Ascending aorta (tissue), 2 donors: ENCODE measurements at regions of chr10 and their contacts with region 1.

Region 1: DNA sequence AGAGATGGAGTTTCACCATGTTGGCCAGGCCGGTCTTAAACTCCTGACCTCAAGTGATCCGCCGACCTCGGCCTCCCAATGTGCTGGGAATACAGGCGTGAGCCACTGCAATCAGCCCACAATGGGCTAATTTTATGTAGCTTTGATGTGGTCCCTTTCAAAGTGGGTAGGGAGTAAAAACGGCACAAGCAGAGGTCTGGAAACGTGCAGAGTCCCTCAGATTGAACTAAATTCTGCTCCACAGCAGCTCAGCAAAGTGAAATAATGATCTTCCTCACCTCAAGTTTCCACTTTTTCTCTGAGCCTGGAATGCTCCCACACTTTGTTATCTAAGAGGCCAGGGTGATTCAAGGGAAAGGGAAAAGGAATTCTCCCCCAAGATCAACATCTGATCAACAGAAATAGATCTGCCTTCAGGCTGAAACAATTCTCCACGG is 6.1 kb downstream of the CCDC3 start:
- DNase-seq: no peak
- H3K4me3 ChIP-seq: peak overlapping the region in 1 of 2 donors; percentile 19
- H3K27ac ChIP-seq: peak overlapping the region; percentile 62 to 65
- H3K4me1 ChIP-seq: peaks cover 5 to 15% of the 10 kb centered on the region in 2 donors
- H3K27me3 ChIP-seq: no peaks in the 10 kb centered on the region
- CTCF ChIP-seq: no peak

Region 2: GRCh38 chr10:12960334-12960898 is 35.0 kb before region 1 on chr10:
- intact Hi-C with region 1: loop called (anchors 5 kb)
- DNase-seq: peak in 1 of 2 donors; percentile 73
- H3K4me3 ChIP-seq: peak overlapping the region; percentile 29 to 57
- H3K27ac ChIP-seq: peak overlapping the region; percentile 90 to 91
- H3K4me1 ChIP-seq: peaks cover 8 to 20% of the 10 kb centered on the region in 2 donors
- H3K27me3 ChIP-seq: no peaks in the 10 kb centered on the region
- CTCF ChIP-seq: no peak